Ascending aorta (tissue), 2 donors: ENCODE measurements at regions of chr2 and their contacts with region 1.

Region 1: GRCh38 chr2:55099878-55100820 is 49.9 kb upstream of the RTN4 start:
- DNase-seq: no peak
- H3K4me3 ChIP-seq: peak overlapping the region in 1 of 2 donors; percentile 35
- H3K27ac ChIP-seq: peak overlapping the region; percentile 92 to 94
- H3K4me1 ChIP-seq: peaks cover 8 to 54% of the 10 kb centered on the region in 2 donors
- H3K27me3 ChIP-seq: no peaks in the 10 kb centered on the region
- CTCF ChIP-seq: no peak

Region 2: GRCh38 chr2:54866868-54867267 is 233.3 kb before region 1 on chr2:
- intact Hi-C with region 1: no loop called
- DNase-seq: no peak
- H3K4me3 ChIP-seq: no peak overlapping the region
- H3K27ac ChIP-seq: no peak overlapping the region
- H3K4me1 ChIP-seq: no peaks in the 10 kb centered on the region
- H3K27me3 ChIP-seq: no peaks in the 10 kb centered on the region
- CTCF ChIP-seq: no peak

Region 3: DNA sequence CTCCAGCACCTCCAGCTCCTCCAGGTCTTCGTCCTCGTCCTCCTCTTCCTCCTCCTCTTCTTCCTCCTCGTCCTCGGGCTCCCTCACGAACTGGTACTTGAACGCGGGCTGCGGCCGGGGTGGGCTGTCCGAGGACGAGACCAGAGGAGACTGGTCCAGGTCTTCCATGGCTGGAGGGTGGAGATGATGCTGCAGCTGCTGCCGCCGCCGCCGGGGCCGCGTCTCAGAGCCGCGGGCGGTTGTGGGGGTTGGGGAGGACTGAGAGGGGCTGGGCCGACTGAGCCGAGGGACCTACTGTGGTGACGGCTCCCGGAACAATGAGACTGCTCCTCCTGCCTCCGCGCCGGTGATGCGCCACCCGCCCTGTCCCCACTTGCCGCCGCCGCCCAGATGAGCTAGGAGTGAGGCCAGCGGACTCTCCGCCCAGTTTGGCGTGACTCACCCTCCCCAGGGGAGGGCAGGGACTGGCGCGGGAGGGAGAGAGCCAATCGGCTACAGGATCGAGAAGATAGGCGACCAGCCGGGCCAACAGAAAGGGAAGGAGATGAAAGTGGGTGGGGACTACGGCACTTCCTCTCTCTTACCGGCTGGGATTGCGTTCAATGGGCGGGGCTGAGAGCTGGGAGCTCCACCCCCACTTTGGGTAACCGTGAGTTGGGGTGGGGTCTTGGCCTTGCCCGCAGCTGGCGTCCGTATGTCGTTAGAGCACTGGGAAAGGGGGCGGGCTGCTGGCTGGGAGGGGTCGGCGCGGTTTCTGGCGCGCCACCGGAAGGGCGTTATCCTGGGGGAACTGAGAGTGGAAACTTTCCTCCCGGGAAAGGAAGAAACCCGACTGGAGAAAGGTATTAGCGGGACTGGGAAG is 49.8 kb before region 1 on chr2 and contains the start of gene RTN4:
- intact Hi-C with region 1: loop called (anchors 1 kb)
- DNase-seq: peak; percentile 98 to 99
- H3K4me3 ChIP-seq: peak within 1 kb of the TSS; percentile 79 to 90
- H3K27ac ChIP-seq: peak within 1 kb of the TSS; percentile 95 to 96
- H3K4me1 ChIP-seq: peaks cover 2 to 17% of the 10 kb centered on the region in 2 donors
- H3K27me3 ChIP-seq: no peaks in the 10 kb centered on the region
- CTCF ChIP-seq: no peak
- total RNA-seq, gene RTN4: 296 TPM

Region 4: GRCh38 chr2:55111570-55112228 is 11.6 kb after region 1 on chr2:
- intact Hi-C with region 1: loop called (anchors 1 kb)
- DNase-seq: peak; percentile 66 to 92
- H3K4me3 ChIP-seq: no peak overlapping the region
- H3K27ac ChIP-seq: peak overlapping the region; percentile 81 to 88
- H3K4me1 ChIP-seq: peaks cover 9 to 32% of the 10 kb centered on the region in 2 donors
- H3K27me3 ChIP-seq: no peaks in the 10 kb centered on the region
- CTCF ChIP-seq: no peak

Region 5: DNA sequence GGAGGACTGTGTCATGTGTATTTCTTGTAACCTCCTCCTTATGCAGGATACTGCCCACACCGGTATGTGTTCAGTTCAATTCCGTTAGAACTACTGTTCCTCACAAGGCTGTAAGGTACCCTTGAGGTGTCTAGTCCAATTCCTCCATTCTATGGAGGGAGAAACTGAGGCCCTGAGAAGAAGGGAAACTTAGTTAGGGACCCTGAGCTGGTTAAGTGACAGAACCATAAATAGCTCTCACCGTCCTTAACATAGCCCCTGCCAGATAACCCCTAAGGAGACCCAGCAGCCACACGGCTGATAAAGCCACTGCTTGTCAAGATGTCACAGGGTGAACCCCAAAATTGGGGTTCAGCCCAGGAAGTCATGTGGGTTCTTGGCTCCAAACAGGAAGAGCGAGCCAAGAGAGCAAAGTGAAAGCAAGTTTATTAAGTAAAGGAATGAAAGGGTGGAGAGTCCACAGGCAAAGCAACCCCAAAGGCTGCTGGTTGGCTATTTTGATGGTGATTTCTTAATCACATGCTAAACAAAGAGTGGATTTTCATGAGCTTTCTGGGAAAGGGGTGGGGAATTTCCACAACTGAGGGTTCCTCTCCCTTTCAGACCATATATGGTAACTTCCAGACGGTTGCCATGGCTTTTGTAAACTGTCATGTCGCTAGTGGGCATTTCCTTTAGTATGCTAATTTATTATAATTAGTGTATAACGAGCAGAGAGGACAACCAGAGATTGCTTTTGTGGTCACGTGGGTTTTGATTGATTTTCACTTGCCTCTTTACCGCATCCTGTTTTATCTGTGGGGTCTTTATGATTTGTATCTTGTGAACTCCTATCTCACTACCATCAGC is 33.5 kb after region 1 on chr2:
- intact Hi-C with region 1: loop called (anchors 1 kb)
- DNase-seq: peak in 1 of 2 donors; percentile 83
- H3K4me3 ChIP-seq: peak overlapping the region; percentile 46 to 66
- H3K27ac ChIP-seq: peak overlapping the region; percentile 70 to 79
- H3K4me1 ChIP-seq: peaks cover 4% of the 10 kb centered on the region in 2 donors
- H3K27me3 ChIP-seq: no peaks in the 10 kb centered on the region
- CTCF ChIP-seq: no peak

Region 6: GRCh38 chr2:55144922-55145820 is 45.0 kb after region 1 on chr2:
- intact Hi-C with region 1: no loop called
- DNase-seq: no peak
- H3K4me3 ChIP-seq: no peak overlapping the region
- H3K27ac ChIP-seq: no peak overlapping the region
- H3K4me1 ChIP-seq: no peaks in the 10 kb centered on the region
- H3K27me3 ChIP-seq: no peaks in the 10 kb centered on the region
- CTCF ChIP-seq: no peak

Region 7: GRCh38 chr2:55157474-55157884 is 57.3 kb after region 1 on chr2:
- intact Hi-C with region 1: loop called (anchors 2 kb)
- DNase-seq: peak in 1 of 2 donors; percentile 63
- H3K4me3 ChIP-seq: no peak overlapping the region
- H3K27ac ChIP-seq: peak overlapping the region; percentile 79 to 81
- H3K4me1 ChIP-seq: peaks cover 14 to 58% of the 10 kb centered on the region in 2 donors
- H3K27me3 ChIP-seq: no peaks in the 10 kb centered on the region
- CTCF ChIP-seq: peak in 2 of 3 experiments; percentile 31 to 36

Region 8: GRCh38 chr2:55168221-55169154 is 68.3 kb after region 1 on chr2:
- intact Hi-C with region 1: loop called (anchors 2 kb)
- DNase-seq: peak in 1 of 2 donors; percentile 83
- H3K4me3 ChIP-seq: no peak overlapping the region
- H3K27ac ChIP-seq: peak overlapping the region; percentile 73
- H3K4me1 ChIP-seq: peaks cover 0 to 36% of the 10 kb centered on the region in 2 donors
- H3K27me3 ChIP-seq: no peaks in the 10 kb centered on the region
- CTCF ChIP-seq: peak; percentile 63 to 73 (median 71)

Region 9: GRCh38 chr2:55232084-55232862 is 132.1 kb after region 1 on chr2 and contains the starts of genes CLHC1 and RPS27A:
- intact Hi-C with region 1: no loop called
- DNase-seq: peak; percentile 50 to 92
- H3K4me3 ChIP-seq: peak within 1 kb of the TSS; percentile 69 to 86
- H3K27ac ChIP-seq: peak within 1 kb of the TSS; percentile 84 to 90
- H3K4me1 ChIP-seq: peaks cover 7 to 20% of the 10 kb centered on the region in 2 donors
- H3K27me3 ChIP-seq: no peaks in the 10 kb centered on the region
- CTCF ChIP-seq: no peak
- total RNA-seq, gene CLHC1: not detected
- total RNA-seq, gene RPS27A: 262 TPM